Mammary epithelial cell (primary cell): ENCODE measurements at regions of chr2 and their contacts with region 1.

Region 1: GRCh38 chr2:62410015-62410453 is 96.0 kb downstream of the TMEM17 start:
- DNase-seq: no peak
- H3K4me3 ChIP-seq: no peak overlapping the region
- H3K27ac ChIP-seq: no peak overlapping the region
- H3K4me1 ChIP-seq: peaks cover 18% of the 10 kb centered on the region
- H3K27me3 ChIP-seq: no peaks in the 10 kb centered on the region
- CTCF ChIP-seq: peak in 1 of 2 donors; percentile 32

Region 2: GRCh38 chr2:61910603-61911002 is 499.4 kb before region 1 on chr2:
- CTCF ChIA-PET with region 1: no interaction called
- dilution Hi-C with region 1: no loop called
- in situ Hi-C with region 1: loop called in 1 of 2 experiments (anchors 5 kb)
- intact Hi-C with region 1: no loop called
- DNase-seq: no peak
- H3K4me3 ChIP-seq: no peak overlapping the region
- H3K27ac ChIP-seq: no peak overlapping the region
- H3K4me1 ChIP-seq: no peaks in the 10 kb centered on the region
- H3K27me3 ChIP-seq: no peaks in the 10 kb centered on the region
- CTCF ChIP-seq: peak; percentile 4 to 43

Region 3: GRCh38 chr2:61928826-61929461 is 481.1 kb before region 1 on chr2:
- CTCF ChIA-PET with region 1: no interaction called
- dilution Hi-C with region 1: no loop called
- in situ Hi-C with region 1: loop called in 1 of 2 experiments (anchors 5 kb)
- intact Hi-C with region 1: no loop called
- DNase-seq: no peak
- H3K4me3 ChIP-seq: no peak overlapping the region
- H3K27ac ChIP-seq: no peak overlapping the region
- H3K4me1 ChIP-seq: no peaks in the 10 kb centered on the region
- H3K27me3 ChIP-seq: no peaks in the 10 kb centered on the region
- CTCF ChIP-seq: no peak

Region 4: DNA sequence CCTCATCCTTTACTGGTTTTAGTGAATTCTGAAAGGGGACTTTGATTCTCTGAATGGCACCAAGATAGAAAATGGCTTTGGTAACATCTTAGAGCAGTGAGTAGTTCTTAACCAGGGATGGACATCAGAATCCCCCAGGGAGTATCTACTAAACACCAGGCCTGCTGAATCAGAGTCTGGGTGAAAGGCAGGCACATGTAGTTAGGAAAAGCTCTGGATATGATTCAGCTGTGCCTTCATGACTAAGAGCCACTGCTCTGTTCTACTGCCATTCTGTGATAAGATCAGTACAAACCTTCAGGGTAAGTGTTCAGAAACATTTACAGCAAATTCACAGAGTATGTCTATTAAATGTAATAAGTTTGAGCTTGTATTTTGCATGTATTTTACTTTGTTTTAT is 260.3 kb before region 1 on chr2:
- CTCF ChIA-PET with region 1: no interaction called
- dilution Hi-C with region 1: no loop called
- in situ Hi-C with region 1: no loop called
- intact Hi-C with region 1: loop called (anchors 5 kb)
- DNase-seq: peak; percentile 96
- H3K4me3 ChIP-seq: no peak overlapping the region
- H3K27ac ChIP-seq: peak overlapping the region; percentile 61
- H3K4me1 ChIP-seq: peaks cover 34% of the 10 kb centered on the region
- H3K27me3 ChIP-seq: no peaks in the 10 kb centered on the region
- CTCF ChIP-seq: no peak

Region 5: GRCh38 chr2:62270728-62271127 is 139.3 kb before region 1 on chr2:
- CTCF ChIA-PET with region 1: no interaction called
- dilution Hi-C with region 1: loop called (anchors 5 kb)
- in situ Hi-C with region 1: no loop called
- intact Hi-C with region 1: no loop called
- DNase-seq: no peak
- H3K4me3 ChIP-seq: no peak overlapping the region
- H3K27ac ChIP-seq: no peak overlapping the region
- H3K4me1 ChIP-seq: no peaks in the 10 kb centered on the region
- H3K27me3 ChIP-seq: no peaks in the 10 kb centered on the region
- CTCF ChIP-seq: no peak

Region 6: DNA sequence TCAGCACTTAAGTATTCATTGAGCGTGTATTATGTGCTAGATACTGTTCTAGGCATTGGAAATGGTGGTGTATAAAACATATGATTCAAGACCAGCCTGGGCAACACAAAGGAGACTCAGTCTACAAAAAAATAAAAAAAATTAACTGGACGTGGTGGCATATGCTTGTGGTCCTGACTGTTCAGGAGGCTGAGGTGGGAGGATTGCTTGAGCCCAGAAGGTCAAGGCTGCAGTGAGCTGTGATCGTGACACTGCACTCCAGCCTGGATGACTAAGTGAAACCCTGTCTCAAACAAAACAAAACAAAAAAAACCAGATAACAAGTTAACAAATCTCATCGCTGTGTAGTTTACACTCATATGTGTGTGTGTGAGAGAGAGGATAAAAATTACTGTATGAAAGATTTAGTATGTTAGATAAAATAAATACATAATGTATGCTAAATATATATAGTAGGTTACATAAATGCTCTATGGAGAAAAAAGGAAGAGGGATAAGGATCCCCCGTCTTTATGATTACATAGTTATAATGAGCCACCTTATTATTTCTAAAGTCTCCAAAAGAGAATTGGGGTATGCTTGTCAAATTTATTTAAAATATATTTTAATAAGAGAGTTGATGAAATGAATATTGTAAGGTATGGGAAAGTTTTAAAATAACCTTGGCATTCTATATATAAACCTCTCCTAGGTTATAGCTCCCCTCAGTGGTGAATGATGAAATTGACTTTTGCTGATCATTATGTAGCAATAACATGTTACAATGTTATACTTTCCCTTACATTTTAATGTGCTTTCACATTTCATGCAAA is 364.7 kb after region 1 on chr2:
- CTCF ChIA-PET with region 1: no interaction called
- dilution Hi-C with region 1: no loop called
- in situ Hi-C with region 1: no loop called
- intact Hi-C with region 1: loop called (anchors 2 kb)
- DNase-seq: peak; percentile 46
- H3K4me3 ChIP-seq: no peak overlapping the region
- H3K27ac ChIP-seq: peak overlapping the region; percentile 40
- H3K4me1 ChIP-seq: no peaks in the 10 kb centered on the region
- H3K27me3 ChIP-seq: no peaks in the 10 kb centered on the region
- CTCF ChIP-seq: peak; percentile 71